Dorsolateral prefrontal cortex (tissue), 120 donors: ENCODE measurements at regions of chr2 and their contacts with region 1.

Region 1: GRCh38 chr2:218710687-218711549 is at the start of gene TTLL4:
- DNase-seq: peak; percentile 96 to 99 (median 98)
- H3K4me3 ChIP-seq: peak within 1 kb of the TSS; percentile 66 to 100 (median 90)
- H3K27ac ChIP-seq: peak within 1 kb of the TSS; percentile 35 to 96 (median 88)
- H3K27me3 ChIP-seq: no peaks in the 10 kb centered on the region
- CTCF ChIP-seq: peak; percentile 78 to 99 (median 96)
- total RNA-seq, gene TTLL4: 19.5 to 103 (median 40.4) TPM

Region 2: DNA sequence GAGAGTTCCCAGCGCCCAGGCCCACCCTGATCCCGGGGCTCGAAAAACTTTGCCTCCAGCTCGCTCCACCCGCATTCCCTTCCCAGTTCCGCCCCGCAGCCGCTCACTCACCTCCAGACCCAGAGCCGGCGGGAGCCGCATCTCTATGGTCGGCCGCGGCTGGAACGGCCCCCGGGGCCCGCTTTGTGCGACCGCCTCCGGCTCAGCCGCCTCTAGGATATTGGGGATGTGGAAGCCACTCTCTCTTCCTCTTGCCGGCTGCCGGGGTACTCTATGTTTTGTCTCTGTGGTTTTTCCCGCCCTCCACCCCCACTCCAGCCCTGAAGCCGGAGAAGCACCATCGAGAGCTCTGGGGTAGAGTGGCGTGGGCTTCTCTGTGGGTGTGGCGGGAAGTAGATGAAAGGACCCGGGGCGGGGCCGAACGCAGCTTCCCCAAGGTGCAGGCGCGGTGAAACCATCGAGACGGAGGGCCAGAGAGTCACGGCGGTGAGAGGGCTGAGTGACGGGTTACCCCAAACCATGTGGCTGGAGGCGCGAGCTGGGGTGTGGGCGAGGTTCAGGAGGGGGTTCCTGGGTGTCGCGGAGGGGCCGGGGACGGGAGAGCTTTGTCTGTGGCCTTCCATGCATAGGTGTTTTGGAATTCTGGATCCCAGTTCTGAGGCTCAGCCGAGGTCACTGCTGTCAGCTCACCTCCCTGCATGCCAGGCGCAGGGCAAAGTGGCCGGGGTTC is 51.5 kb before region 1 on chr2 and contains the starts of genes BCS1L and ZNF142:
- intact Hi-C with region 1: loop called in 1 of 2 experiments (anchors 5 kb)
- DNase-seq: peak; percentile 81 to 96 (median 95)
- H3K4me3 ChIP-seq: peak within 1 kb of the TSS; percentile 68 to 99 (median 89)
- H3K27ac ChIP-seq: peak within 1 kb of the TSS in 51 of 59 donors; percentile 11 to 86 (median 66)
- H3K27me3 ChIP-seq: no peaks in the 10 kb centered on the region
- CTCF ChIP-seq: peak in 29 of 56 donors; percentile 10 to 51 (median 27)
- total RNA-seq, gene BCS1L: 21.5 to 56.6 (median 35.8) TPM
- total RNA-seq, gene ZNF142: 32.6 to 56.7 (median 43.4) TPM

Region 3: GRCh38 chr2:218745559-218746469 is 34.9 kb after region 1 on chr2:
- intact Hi-C with region 1: loop called in 1 of 2 experiments (anchors 1 kb)
- DNase-seq: peak; percentile 41 to 97 (median 92)
- H3K4me3 ChIP-seq: peak overlapping the region in 54 of 59 donors; percentile 5 to 63 (median 38)
- H3K27ac ChIP-seq: peak overlapping the region; percentile 77 to 100 (median 97)
- H3K27me3 ChIP-seq: no peaks in the 10 kb centered on the region
- CTCF ChIP-seq: peak in 13 of 56 donors; percentile 6 to 31 (median 14)

Region 4: GRCh38 chr2:218781691-218782527 is 71.0 kb after region 1 on chr2 and contains the start of gene CYP27A1:
- intact Hi-C with region 1: loop called (anchors 2 to 5 kb)
- DNase-seq: peak; percentile 7 to 74 (median 69)
- H3K4me3 ChIP-seq: peak within 1 kb of the TSS; percentile 50 to 90 (median 77)
- H3K27ac ChIP-seq: peak within 1 kb of the TSS; percentile 9 to 96 (median 90)
- H3K27me3 ChIP-seq: peaks cover 0 to 15% (median 0%) of the 10 kb centered on the region in 45 donors
- CTCF ChIP-seq: peak in 2 of 56 donors; percentile 12
- total RNA-seq, gene CYP27A1: 12.4 to 139 (median 33.9) TPM

Region 5: GRCh38 chr2:218849721-218850120 is 138.8 kb after region 1 on chr2:
- intact Hi-C with region 1: loop called (anchors 1 kb)
- DNase-seq: no peak
- H3K4me3 ChIP-seq: no peak overlapping the region
- H3K27ac ChIP-seq: no peak overlapping the region
- H3K27me3 ChIP-seq: peaks cover 0 to 44% (median 10%) of the 10 kb centered on the region in 45 donors
- CTCF ChIP-seq: no peak